CD14-positive monocyte (primary cell): ENCODE measurements at regions of chr3 and their contacts with region 1.

Region 1: DNA sequence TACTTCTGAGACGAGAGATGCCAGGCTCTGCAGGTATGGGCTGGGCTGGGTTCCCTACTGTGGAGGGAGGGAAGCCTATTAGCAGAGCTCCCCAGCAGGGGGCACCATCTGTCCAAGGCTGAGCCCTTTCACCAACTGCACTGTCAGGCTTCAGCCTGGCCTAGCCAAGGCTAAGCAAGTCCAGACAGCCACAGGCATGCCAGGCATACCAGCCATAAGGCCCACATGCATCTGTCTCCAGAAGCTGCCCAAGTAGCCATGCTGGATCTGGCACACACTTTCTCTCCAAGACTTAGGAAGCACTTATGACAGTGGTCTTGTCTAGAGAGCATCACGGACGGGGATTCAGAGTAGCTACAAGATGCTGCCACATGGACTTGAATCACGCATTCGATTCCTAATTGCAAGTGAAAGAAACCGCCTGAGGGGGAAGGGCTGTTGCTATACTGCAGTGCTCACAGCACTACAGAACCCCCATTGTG is 28.3 kb downstream of the RUVBL1 start:
- DNase-seq: peak; percentile 55 to 70 (median 65)
- H3K4me3 ChIP-seq: no peak overlapping the region
- H3K4me3 Mint-ChIP-seq: no peak overlapping the region
- H3K27ac ChIP-seq: no peak overlapping the region
- H3K27ac Mint-ChIP-seq: no peak overlapping the region
- H3K4me1 ChIP-seq: no peaks in the 10 kb centered on the region
- H3K4me1 Mint-ChIP-seq: no peaks in the 10 kb centered on the region
- H3K27me3 ChIP-seq: no peaks in the 10 kb centered on the region
- H3K27me3 Mint-ChIP-seq: no peaks in the 10 kb centered on the region
- CTCF ChIP-seq: peak; percentile 90

Region 2: GRCh38 chr3:128322066-128323022 is 227.1 kb after region 1 on chr3:
- intact Hi-C with region 1: loop called in 1 of 2 experiments (anchors 10 kb)
- DNase-seq: peak in 1 of 3 donors; percentile 6
- H3K4me3 ChIP-seq: no peak overlapping the region
- H3K4me3 Mint-ChIP-seq: no peak overlapping the region
- H3K27ac ChIP-seq: no peak overlapping the region
- H3K27ac Mint-ChIP-seq: no peak overlapping the region
- H3K4me1 ChIP-seq: no peaks in the 10 kb centered on the region
- H3K4me1 Mint-ChIP-seq: peaks cover 11% of the 10 kb centered on the region
- H3K27me3 ChIP-seq: no peaks in the 10 kb centered on the region
- H3K27me3 Mint-ChIP-seq: peaks cover 0 to 2% (median 0%) of the 10 kb centered on the region in 3 donors
- CTCF ChIP-seq: peak; percentile 40

Region 3: DNA sequence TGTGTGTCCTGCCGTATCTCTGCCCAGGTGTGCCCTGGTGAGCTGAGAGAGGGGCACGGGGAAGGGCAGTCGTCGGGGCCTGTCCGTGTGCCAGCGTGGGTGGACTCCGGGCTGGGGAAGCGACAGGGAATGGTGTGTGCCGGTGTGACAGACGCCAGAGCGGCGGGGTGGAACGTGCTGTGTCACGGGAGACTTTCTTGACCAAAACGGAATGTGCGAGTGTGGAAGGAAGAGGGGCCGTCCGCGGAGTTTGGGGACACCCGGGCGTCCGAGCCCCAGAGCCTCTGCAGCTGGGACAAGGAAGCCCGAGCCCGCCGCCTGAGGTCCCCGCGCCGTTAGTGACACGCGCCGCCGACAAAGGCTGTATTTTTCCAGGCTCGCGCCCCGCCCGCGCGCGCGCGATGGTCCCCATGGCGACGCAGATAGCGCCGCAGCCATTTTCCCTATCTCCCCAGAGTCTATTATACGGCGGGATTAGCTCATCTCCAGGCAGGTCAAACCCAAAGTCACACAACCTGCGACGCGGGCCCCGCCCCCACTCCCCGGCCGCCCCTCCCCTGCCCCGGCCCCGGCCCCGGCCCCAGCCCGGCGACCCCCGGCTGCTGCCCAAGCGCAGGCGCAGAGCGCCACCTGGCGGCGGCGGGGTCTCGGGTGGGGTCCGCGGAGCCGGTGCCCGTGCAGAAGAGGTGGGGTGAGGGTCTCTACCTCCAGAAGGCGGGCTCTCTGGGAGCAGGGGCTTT is 402.3 kb after region 1 on chr3:
- intact Hi-C with region 1: loop called in 1 of 2 experiments (anchors 10 kb)
- DNase-seq: peak; percentile 28 to 54 (median 33)
- H3K4me3 ChIP-seq: peak overlapping the region; percentile 36 to 70 (median 43)
- H3K4me3 Mint-ChIP-seq: peak overlapping the region; percentile 77 to 90
- H3K27ac ChIP-seq: no peak overlapping the region
- H3K27ac Mint-ChIP-seq: peak overlapping the region in 1 of 7 donors; percentile 72
- H3K4me1 ChIP-seq: peaks cover 8 to 18% of the 10 kb centered on the region in 2 donors
- H3K4me1 Mint-ChIP-seq: peaks cover 14% of the 10 kb centered on the region
- H3K27me3 ChIP-seq: peaks cover 17 to 58% of the 10 kb centered on the region in 2 donors
- H3K27me3 Mint-ChIP-seq: peaks cover 48 to 66% (median 60%) of the 10 kb centered on the region in 3 donors
- CTCF ChIP-seq: peak; percentile 91